Endothelial cell of umbilical vein (primary cell): ENCODE measurements at regions of chr10 and their contacts with region 1.

Region 1: GRCh38 chr10:114470956-114471905 is 66.9 kb upstream of the AFAP1L2 start:
- DNase-seq: peak; percentile 78
- H3K4me3 ChIP-seq: no peak overlapping the region
- H3K27ac ChIP-seq: no peak overlapping the region
- H3K4me1 ChIP-seq: no peaks in the 10 kb centered on the region
- H3K27me3 ChIP-seq: no peaks in the 10 kb centered on the region
- CTCF ChIP-seq: peak; percentile 79 to 85
- POLR2A ChIP-seq: no peak

Region 2: GRCh38 chr10:114220281-114220680 is 250.9 kb before region 1 on chr10:
- CTCF ChIA-PET with region 1: no interaction called
- POLR2A ChIA-PET with region 1: no interaction called
- dilution Hi-C with region 1: no loop called
- intact Hi-C with region 1: no loop called
- DNase-seq: no peak
- H3K4me3 ChIP-seq: no peak overlapping the region
- H3K27ac ChIP-seq: no peak overlapping the region
- H3K4me1 ChIP-seq: no peaks in the 10 kb centered on the region
- H3K27me3 ChIP-seq: peaks cover 5 to 8% of the 10 kb centered on the region in 2 experiments
- CTCF ChIP-seq: no peak
- POLR2A ChIP-seq: no peak

Region 3: GRCh38 chr10:114297136-114297705 is 174.0 kb before region 1 on chr10:
- CTCF ChIA-PET with region 1: no interaction called
- POLR2A ChIA-PET with region 1: no interaction called
- dilution Hi-C with region 1: no loop called
- intact Hi-C with region 1: no loop called
- DNase-seq: no peak
- H3K4me3 ChIP-seq: no peak overlapping the region
- H3K27ac ChIP-seq: no peak overlapping the region
- H3K4me1 ChIP-seq: no peaks in the 10 kb centered on the region
- H3K27me3 ChIP-seq: peaks cover 0 to 5% of the 10 kb centered on the region in 2 experiments
- CTCF ChIP-seq: no peak
- POLR2A ChIP-seq: no peak

Region 4: DNA sequence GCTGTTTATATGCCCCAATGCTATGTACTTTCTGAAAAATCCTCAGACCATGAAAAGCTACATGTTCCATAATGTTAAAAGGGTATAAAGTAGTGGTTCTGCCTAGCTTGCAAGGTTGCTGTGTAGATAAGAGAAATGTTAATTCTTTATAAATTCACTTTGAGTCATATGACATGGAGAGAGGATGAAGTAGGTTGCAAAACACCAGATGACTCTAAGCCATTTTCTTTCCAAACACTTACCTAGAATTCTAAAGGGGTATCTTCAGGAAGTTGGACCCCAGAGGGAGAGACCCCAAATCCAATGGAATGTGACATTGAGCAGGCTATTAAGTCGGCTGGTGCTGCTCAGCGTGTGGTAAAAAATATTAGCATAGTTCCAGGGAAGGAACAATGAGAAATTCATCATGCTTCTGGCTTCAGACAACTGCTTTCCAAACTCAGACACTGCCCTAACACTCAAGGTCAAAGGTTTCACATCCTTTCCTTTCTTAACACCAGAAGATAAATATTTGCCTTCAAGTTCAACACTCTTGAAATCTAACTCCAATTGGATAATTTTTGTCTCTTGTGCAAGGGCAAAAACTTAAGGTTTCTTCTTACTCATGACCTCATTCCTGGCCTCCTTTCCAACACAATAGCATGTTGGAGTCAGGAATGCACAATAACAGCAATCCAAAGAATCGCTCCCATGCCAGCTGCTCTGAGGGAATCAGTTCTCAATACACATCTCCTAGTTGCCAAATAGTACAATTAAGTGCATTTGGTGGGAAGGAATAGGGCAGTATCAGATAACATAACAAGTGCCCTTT is 33.7 kb after region 1 on chr10:
- CTCF ChIA-PET with region 1: interaction called, 12 read pairs
- POLR2A ChIA-PET with region 1: no interaction called
- dilution Hi-C with region 1: no loop called
- intact Hi-C with region 1: no loop called
- DNase-seq: peak; percentile 99
- H3K4me3 ChIP-seq: no peak overlapping the region
- H3K27ac ChIP-seq: peak overlapping the region; percentile 76
- H3K4me1 ChIP-seq: peaks cover 48% of the 10 kb centered on the region
- H3K27me3 ChIP-seq: no peaks in the 10 kb centered on the region
- CTCF ChIP-seq: no peak
- POLR2A ChIP-seq: no peak

Region 5: DNA sequence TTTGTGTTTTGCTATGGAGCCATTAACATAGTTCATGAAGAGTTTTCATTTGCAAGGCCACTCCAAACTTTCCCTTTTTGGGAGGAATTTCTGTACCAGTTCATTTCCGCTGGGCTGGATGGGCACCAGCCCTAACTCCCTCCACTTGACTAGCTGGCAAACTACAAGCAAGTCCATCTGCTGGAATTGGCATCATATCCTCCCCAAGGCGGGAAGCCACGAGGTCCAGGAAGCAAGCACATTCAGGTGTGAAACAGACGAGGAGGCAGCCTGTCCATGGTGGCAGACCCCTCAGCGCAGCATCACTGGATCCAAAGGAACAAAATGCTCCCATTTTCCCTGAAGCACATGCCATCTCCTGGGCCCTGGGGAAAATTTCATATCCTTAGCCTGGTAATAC is 61.0 kb after region 1 on chr10:
- CTCF ChIA-PET with region 1: interaction called, 37 read pairs
- POLR2A ChIA-PET with region 1: no interaction called
- dilution Hi-C with region 1: no loop called
- intact Hi-C with region 1: no loop called
- DNase-seq: no peak
- H3K4me3 ChIP-seq: no peak overlapping the region
- H3K27ac ChIP-seq: no peak overlapping the region
- H3K4me1 ChIP-seq: peaks cover 8% of the 10 kb centered on the region
- H3K27me3 ChIP-seq: no peaks in the 10 kb centered on the region
- CTCF ChIP-seq: no peak
- POLR2A ChIP-seq: no peak

Region 6: GRCh38 chr10:114550756-114551635 is 79.8 kb after region 1 on chr10:
- CTCF ChIA-PET with region 1: interaction called, 208 read pairs
- POLR2A ChIA-PET with region 1: no interaction called
- dilution Hi-C with region 1: no loop called
- intact Hi-C with region 1: loop called (anchors 1 kb)
- DNase-seq: peak; percentile 93
- H3K4me3 ChIP-seq: no peak overlapping the region
- H3K27ac ChIP-seq: no peak overlapping the region
- H3K4me1 ChIP-seq: peaks cover 11% of the 10 kb centered on the region
- H3K27me3 ChIP-seq: no peaks in the 10 kb centered on the region
- CTCF ChIP-seq: peak in 1 of 2 donors; percentile 15
- POLR2A ChIP-seq: no peak

Region 7: DNA sequence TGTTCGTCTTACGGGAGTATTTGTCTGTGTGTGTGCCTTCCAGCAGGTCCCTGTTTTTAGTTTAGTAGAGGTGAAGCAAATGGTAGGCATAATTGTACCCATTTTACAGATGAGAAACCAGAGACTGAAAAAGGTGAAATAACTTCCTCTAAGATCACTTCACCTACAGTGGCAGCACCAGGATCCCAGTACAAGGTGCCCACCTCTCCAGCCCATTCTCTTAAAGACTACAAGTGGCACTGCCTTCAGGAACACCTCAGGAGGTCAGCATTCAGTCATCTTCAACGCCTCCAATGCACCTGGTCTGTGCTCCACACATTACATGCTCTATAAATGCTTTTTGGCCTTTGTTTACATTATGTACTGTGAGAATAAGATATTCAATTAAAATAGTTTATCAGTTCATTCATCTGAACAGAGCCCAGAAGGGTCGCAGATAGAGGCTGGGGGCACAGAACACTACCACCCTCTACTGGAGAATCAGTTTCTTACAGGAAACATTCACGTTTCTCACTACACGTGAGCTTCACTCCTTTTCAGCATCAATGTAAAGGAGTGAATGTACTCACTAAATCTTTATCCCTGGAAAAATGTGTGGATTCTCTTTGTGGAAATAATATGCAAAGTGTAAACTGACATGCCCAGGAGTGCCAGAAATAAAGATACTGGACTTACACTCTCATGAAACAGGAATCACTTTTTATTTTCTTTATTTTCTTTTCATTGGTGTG is 232.3 kb after region 1 on chr10:
- CTCF ChIA-PET with region 1: interaction called, 34 read pairs
- POLR2A ChIA-PET with region 1: no interaction called
- dilution Hi-C with region 1: no loop called
- intact Hi-C with region 1: loop called (anchors 1 kb)
- DNase-seq: peak; percentile 69
- H3K4me3 ChIP-seq: no peak overlapping the region
- H3K27ac ChIP-seq: no peak overlapping the region
- H3K4me1 ChIP-seq: peaks cover under 1% of the 10 kb centered on the region
- H3K27me3 ChIP-seq: no peaks in the 10 kb centered on the region
- CTCF ChIP-seq: peak; percentile 63 to 67
- POLR2A ChIP-seq: no peak

Region 8: DNA sequence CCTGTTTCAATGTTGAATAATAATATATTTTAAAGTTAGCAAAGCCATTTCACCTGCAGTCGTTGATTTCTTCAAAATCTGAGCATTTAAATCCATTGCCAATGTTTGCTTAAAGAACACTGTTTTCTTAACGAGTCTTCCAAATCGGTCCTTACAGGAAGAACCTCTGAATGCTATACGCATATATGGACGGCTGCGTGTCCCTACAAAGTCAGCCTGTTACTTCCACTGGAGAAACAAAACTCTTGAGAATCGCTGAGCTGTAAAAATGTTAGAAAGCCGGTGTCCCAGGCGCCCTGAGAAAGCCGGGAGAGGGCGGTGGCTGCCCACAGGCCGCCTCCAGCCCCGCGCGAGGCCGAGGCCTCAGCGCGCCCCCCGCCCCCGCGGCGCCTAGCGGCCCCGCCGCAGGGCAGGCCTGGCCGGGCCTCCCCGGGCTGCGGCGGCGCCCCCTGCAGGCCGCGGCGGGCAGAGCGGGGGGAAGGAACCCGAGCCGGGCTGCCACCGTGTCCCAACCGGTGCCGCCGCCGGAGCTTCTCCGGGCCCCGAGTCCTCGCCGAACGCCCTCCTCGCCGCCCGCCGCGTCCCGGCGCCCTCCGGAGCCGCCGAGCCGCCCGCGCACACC is 350.2 kb after region 1 on chr10 and contains the start of gene FHIP2A:
- CTCF ChIA-PET with region 1: interaction called, 12 read pairs
- POLR2A ChIA-PET with region 1: no interaction called
- dilution Hi-C with region 1: no loop called
- intact Hi-C with region 1: no loop called
- DNase-seq: peak; percentile 74
- H3K4me3 ChIP-seq: peak within 1 kb of the TSS; percentile 78 to 96 (median 86)
- H3K27ac ChIP-seq: peak within 1 kb of the TSS; percentile 97
- H3K4me1 ChIP-seq: peaks cover 35% of the 10 kb centered on the region
- H3K27me3 ChIP-seq: no peaks in the 10 kb centered on the region
- CTCF ChIP-seq: peak; percentile 53 to 60
- POLR2A ChIP-seq: peak; percentile 61
- total RNA-seq, gene FHIP2A: 34.8 and 39.6 TPM in 2 replicates